ENCODE measurements at regions of chr15 and their contacts with region 1.

Region 1: DNA sequence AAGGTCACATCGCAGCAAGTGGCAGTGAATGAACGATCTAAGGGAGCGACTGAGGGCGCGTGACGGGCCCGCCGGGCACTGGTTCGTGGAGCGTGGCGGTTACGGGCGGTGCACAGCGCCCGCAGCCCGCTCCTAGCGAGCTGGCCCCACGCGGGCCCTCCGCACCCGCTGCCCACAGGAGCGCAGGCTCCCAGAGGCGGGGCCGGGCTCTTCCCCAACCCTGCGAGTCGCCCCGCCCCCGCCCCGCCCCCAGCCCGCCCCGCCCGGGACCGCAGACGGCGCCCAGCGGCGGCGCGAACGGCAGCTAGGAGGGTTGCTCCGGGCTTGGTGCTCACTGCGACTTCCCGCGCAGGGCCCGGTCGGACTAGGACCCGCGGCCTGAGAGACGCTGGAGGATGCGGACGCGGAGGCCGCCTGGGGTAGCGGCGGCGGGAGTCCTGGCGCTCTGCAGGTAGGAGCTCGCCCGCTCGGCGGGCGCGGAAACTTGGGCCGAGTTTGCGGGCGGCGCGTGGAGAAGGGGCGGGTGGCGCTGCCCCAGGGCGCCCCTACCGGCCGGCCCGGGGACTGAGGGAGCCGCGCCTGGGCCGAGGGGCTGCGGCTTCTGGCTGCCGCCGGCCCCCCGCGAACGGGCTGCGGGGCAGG is at the start of gene C15orf39:
- DNase-seq: peak; percentile 33
- ATAC-seq: peak; percentile 63
- H3K4me3 ChIP-seq: peak within 1 kb of the TSS; percentile 88 to 98 (median 91)
- H3K27ac ChIP-seq: peak within 1 kb of the TSS; percentile 80
- H3K4me1 ChIP-seq: peaks cover 77% of the 10 kb centered on the region
- H3K27me3 ChIP-seq: no peaks in the 10 kb centered on the region; a peak in 1 of 5 replicates
- CTCF ChIP-seq: peak; percentile 67
- EP300 ChIP-seq: no peak
- POLR2A ChIP-seq: peak in 1 of 2 experiments; percentile 89; a peak in 2 of 4 replicates
- RAD21 ChIP-seq: peak; percentile 85
- total RNA-seq, gene C15orf39: 13.5 and 17.5 TPM in 2 replicates

Region 2: GRCh38 chr15:75023181-75023871 is 178.4 kb before region 1 on chr15 and contains the start of gene PPCDC:
- CTCF ChIA-PET with region 1: interaction called, 37 read pairs
- POLR2A ChIA-PET with region 1: interaction called, 13 read pairs
- in situ Hi-C with region 1: no loop called
- intact Hi-C with region 1: no loop called
- DNase-seq: peak; percentile 94
- ATAC-seq: peak; percentile 98
- H3K4me3 ChIP-seq: peak within 1 kb of the TSS; percentile 87 to 95 (median 94)
- H3K27ac ChIP-seq: peak within 1 kb of the TSS; percentile 80
- H3K4me1 ChIP-seq: peaks cover 25% of the 10 kb centered on the region
- H3K27me3 ChIP-seq: no peaks in the 10 kb centered on the region
- CTCF ChIP-seq: no peak
- EP300 ChIP-seq: 0 out of 4 replicates have a peak, but pooled peaks of 1 of the 2 experiments have one; percentile 37
- POLR2A ChIP-seq: peak; percentile 95 to 98
- RAD21 ChIP-seq: peak; percentile 45
- total RNA-seq, gene PPCDC: 9.9 and 12.3 TPM in 2 replicates

Region 3: DNA sequence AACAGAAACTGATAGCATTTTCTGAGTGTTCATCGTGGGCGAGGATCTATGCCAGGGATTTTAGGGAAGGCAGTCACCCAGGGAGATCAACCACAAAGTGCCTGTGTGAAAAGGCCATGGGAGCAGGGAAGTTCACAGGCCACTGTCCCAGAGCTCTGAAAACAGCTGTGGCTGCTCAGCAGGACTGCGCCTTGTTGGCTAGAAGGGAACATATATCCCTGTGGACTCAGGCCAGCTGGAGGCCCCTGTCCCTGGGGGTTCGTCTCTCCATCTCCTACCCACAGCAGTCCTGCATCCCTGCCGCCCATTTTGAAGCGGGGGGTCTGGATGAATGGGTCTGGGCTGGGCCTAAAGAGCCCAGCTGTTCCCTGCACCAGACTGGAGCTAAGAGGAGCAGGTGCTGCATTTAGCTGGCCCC is 150.5 kb before region 1 on chr15:
- CTCF ChIA-PET with region 1: no interaction called
- POLR2A ChIA-PET with region 1: interaction called, 11 read pairs
- in situ Hi-C with region 1: no loop called
- intact Hi-C with region 1: no loop called
- DNase-seq: no peak
- ATAC-seq: no peak
- H3K4me3 ChIP-seq: no peak overlapping the region
- H3K27ac ChIP-seq: no peak overlapping the region
- H3K4me1 ChIP-seq: peaks cover 67% of the 10 kb centered on the region
- H3K27me3 ChIP-seq: no peaks in the 10 kb centered on the region
- CTCF ChIP-seq: no peak
- EP300 ChIP-seq: no peak
- POLR2A ChIP-seq: no peak
- RAD21 ChIP-seq: no peak

Region 4: DNA sequence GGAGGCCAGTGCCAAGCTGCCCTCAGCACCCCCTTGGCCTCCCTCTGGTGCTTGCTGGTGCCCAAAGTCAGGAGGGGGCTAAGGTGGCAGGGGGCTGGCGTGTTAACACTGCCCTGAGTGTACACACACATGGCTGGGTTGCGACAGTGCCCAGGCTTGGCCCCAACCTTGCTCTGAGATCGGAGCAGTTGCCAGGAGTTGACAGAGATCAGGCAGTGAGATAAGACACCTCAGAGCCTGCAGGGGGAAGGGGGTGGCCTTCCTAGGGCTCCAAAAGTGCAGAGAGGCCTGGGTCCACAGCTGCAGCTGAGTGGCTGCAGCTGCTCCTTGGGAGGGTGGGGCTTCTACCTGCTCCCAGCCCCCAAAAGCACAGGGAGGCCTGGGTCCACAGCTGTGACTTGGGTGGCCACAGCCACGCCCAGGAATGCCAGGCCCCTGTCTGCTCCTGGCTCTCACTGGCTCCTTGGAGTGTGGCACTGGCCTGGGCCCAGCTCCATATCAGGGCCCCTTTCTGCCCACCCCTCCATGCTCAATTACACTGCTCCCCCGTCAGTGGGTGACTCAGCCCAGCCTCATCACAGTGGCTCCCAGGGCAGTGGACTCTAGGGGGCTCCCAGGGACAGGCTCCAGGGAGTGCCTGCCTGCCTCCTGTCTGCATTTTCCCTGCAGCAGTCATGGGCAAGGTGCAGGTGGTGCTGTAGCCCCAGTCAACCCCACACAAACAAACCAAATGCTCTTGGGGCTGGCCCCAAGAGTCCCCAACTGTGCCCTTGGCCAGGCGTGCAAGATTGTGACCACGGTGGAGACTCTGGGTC is 56.5 kb before region 1 on chr15:
- CTCF ChIA-PET with region 1: interaction called, 7 read pairs
- POLR2A ChIA-PET with region 1: interaction called, 28 read pairs
- in situ Hi-C with region 1: loop called (anchors 5 kb)
- intact Hi-C with region 1: loop called (anchors 1 kb)
- DNase-seq: peak; percentile 84
- ATAC-seq: peak; percentile 98
- H3K4me3 ChIP-seq: peak overlapping the region in 1 of 3 experiments; percentile 40; a peak in 1 of 6 replicates
- H3K27ac ChIP-seq: peak overlapping the region; percentile 71
- H3K4me1 ChIP-seq: peaks cover 66% of the 10 kb centered on the region
- H3K27me3 ChIP-seq: no peaks in the 10 kb centered on the region
- CTCF ChIP-seq: peak; percentile 94
- EP300 ChIP-seq: peak in 1 of 2 experiments; percentile 50; a peak in 1 of 4 replicates
- POLR2A ChIP-seq: no peak
- RAD21 ChIP-seq: peak; percentile 95

Region 5: DNA sequence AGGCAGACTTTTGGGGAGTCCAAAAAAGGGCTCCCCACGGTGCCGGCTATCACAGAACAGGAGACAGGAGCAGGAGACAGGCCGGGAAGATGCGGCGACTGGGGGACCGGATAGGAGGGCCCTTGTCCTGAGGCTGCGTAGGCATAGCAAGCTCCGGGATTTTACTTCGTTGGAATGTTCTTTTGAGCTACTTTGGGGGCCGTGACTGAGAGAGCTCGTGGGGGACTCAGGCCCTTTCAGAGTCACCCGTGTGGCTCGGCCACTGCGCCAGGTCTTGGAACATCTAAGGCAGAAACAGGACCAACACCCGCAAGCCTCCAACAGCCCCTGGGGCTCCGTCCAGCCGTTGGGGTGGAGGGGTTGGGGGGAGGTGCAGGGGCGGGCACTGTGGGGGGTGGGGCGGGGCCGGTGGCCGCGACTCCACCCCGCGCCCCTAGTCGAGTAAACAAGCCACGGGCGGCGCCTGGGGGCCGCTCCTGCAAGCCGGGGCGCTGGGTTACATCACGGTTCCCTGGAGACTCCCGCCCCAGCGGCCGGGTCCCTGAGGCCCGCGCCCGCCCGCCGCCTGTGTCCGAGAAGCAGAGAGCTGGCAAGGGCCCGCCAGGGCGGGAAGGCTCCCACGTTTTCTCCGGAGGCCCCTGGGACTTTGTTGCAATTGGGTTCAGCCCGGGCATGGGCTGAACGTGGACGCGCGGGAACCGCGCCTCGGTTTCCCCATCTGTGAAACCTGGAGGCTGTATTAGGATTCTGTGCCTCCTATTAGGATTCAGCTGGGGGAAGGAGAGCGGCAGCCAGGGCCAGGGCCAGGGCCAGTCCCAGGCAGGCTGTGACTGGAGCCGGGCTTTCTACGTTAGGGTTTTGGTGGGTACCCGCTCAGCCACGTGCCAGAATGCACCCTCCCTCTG is 23.3 kb before region 1 on chr15:
- CTCF ChIA-PET with region 1: no interaction called
- POLR2A ChIA-PET with region 1: interaction called, 151 read pairs
- in situ Hi-C with region 1: no loop called
- intact Hi-C with region 1: loop called (anchors 2 kb)
- DNase-seq: peak; percentile 75
- ATAC-seq: peak; percentile 72
- H3K4me3 ChIP-seq: peak overlapping the region; percentile 46 to 68 (median 55)
- H3K27ac ChIP-seq: peak overlapping the region; percentile 56
- H3K4me1 ChIP-seq: peaks cover 94% of the 10 kb centered on the region
- H3K27me3 ChIP-seq: no peaks in the 10 kb centered on the region
- CTCF ChIP-seq: peak; percentile 18
- EP300 ChIP-seq: peak in 1 of 2 experiments; percentile 61; a peak in 1 of 4 replicates
- POLR2A ChIP-seq: peak in 1 of 2 experiments; percentile 47; a peak in 2 of 4 replicates
- RAD21 ChIP-seq: peak; percentile 18; the same call in 1 of the 2 replicates

Region 6: GRCh38 chr15:75483961-75484360 is 282.2 kb after region 1 on chr15:
- CTCF ChIA-PET with region 1: no interaction called
- POLR2A ChIA-PET with region 1: no interaction called
- in situ Hi-C with region 1: no loop called
- intact Hi-C with region 1: no loop called
- DNase-seq: no peak
- ATAC-seq: no peak
- H3K4me3 ChIP-seq: no peak overlapping the region
- H3K27ac ChIP-seq: no peak overlapping the region
- H3K4me1 ChIP-seq: no peaks in the 10 kb centered on the region
- H3K27me3 ChIP-seq: no peaks in the 10 kb centered on the region
- CTCF ChIP-seq: no peak
- EP300 ChIP-seq: no peak
- POLR2A ChIP-seq: no peak
- RAD21 ChIP-seq: no peak

Measured in HepG2 (cell line).